Naive thymus-derived CD4-positive, alpha-beta T cell (primary cell): ENCODE measurements at regions of chr2 and their contacts with region 1.

Region 1: GRCh38 chr2:183124222-183124956 is at the start of gene NUP35:
- DNase-seq: peak; percentile 67 to 87 (median 83)
- ATAC-seq: peak; percentile 97
- H3K4me3 ChIP-seq: peak within 1 kb of the TSS; percentile 96
- H3K4me3 Mint-ChIP-seq: peak within 1 kb of the TSS; percentile 90 to 100 (median 96)
- H3K27ac ChIP-seq: peak within 1 kb of the TSS; percentile 74
- H3K27ac Mint-ChIP-seq: peak within 1 kb of the TSS; percentile 93 to 98 (median 97)
- H3K4me1 ChIP-seq: peaks cover 8 to 15% of the 10 kb centered on the region in 2 donors
- H3K4me1 Mint-ChIP-seq: peaks cover 21 to 48% (median 35%) of the 10 kb centered on the region in 7 donors
- H3K27me3 ChIP-seq: no peaks in the 10 kb centered on the region
- H3K27me3 Mint-ChIP-seq: peaks cover 7 to 29% (median 17%) of the 10 kb centered on the region in 5 donors
- total RNA-seq, gene NUP35: 12.5 to 25.3 (median 19.7) TPM

Region 2: DNA sequence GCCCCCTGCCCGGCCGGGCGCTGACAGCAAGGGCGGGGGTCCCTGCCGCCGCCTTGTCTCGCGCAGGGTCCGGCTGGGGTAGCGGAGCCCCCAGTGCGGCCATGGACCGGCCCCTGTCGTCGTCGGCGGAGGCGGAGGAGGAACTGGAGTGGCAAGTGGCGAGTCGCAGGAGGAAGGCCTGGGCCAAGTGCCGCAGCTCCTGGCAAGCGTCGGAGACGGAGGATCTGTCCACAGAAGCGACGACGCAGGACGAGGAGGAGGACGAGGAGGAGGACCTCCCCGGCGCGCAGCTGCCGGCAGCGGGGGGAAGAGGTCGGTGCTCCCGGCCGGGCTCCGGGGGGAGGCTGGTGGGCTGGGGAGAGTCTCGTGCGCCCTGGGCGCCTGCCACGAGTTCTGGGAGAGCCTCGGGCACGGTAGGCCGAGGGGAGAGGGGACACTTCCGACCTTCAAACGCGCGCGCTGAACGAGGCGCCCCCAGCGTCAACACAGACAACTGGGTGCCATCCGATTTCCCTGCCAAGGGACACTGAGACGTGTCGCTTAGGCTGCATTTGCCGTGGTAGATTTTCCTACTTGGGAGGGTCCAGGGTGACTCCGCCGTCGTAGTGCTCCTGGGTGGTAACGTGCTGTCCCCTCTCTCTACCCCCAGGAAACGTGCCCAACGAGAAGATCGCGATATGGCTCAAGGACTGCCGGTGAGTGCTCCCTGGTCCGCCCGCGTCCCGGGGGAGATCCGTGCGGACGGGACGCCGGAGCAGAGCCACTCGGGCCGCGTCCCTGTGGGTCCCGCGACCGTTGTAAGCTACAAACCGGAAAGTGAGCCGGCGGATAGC is 1232.2 kb before region 1 on chr2:
- CTCF ChIA-PET with region 1: no interaction called
- POLR2A ChIA-PET with region 1: no interaction called
- intact Hi-C with region 1: loop called (anchors 1 to 2 kb)
- DNase-seq: peak; percentile 37 to 68 (median 65)
- ATAC-seq: peak; percentile 66
- H3K4me3 ChIP-seq: peak overlapping the region; percentile 85
- H3K4me3 Mint-ChIP-seq: peak overlapping the region; percentile 90 to 99 (median 97)
- H3K27ac ChIP-seq: peak overlapping the region; percentile 76
- H3K27ac Mint-ChIP-seq: peak overlapping the region; percentile 74 to 93 (median 89)
- H3K4me1 ChIP-seq: peaks cover 4 to 22% of the 10 kb centered on the region in 2 donors
- H3K4me1 Mint-ChIP-seq: peaks cover 25 to 49% (median 44%) of the 10 kb centered on the region in 7 donors
- H3K27me3 ChIP-seq: no peaks in the 10 kb centered on the region
- H3K27me3 Mint-ChIP-seq: peaks cover 11 to 35% (median 20%) of the 10 kb centered on the region in 5 donors

Region 3: GRCh38 chr2:183038341-183039300 is 85.8 kb before region 1 on chr2 and contains the start of gene NCKAP1:
- CTCF ChIA-PET with region 1: no interaction called
- POLR2A ChIA-PET with region 1: no interaction called
- intact Hi-C with region 1: loop called (anchors 1 kb)
- DNase-seq: peak; percentile 67 to 94 (median 80)
- ATAC-seq: peak; percentile 92
- H3K4me3 ChIP-seq: peak within 1 kb of the TSS; percentile 77
- H3K4me3 Mint-ChIP-seq: peak within 1 kb of the TSS; percentile 84 to 95 (median 86)
- H3K27ac ChIP-seq: no peak within 1 kb of the TSS
- H3K27ac Mint-ChIP-seq: peak within 1 kb of the TSS in 7 of 9 donors; percentile 55 to 85 (median 69)
- H3K4me1 ChIP-seq: peaks cover 26% of the 10 kb centered on the region in 2 donors
- H3K4me1 Mint-ChIP-seq: peaks cover 24 to 37% (median 34%) of the 10 kb centered on the region in 7 donors
- H3K27me3 ChIP-seq: peaks cover 3 to 28% of the 10 kb centered on the region in 2 donors
- H3K27me3 Mint-ChIP-seq: peaks cover 42 to 80% (median 63%) of the 10 kb centered on the region in 5 donors
- total RNA-seq, gene NCKAP1: 2.4 to 4.1 (median 2.7) TPM

Region 4: DNA sequence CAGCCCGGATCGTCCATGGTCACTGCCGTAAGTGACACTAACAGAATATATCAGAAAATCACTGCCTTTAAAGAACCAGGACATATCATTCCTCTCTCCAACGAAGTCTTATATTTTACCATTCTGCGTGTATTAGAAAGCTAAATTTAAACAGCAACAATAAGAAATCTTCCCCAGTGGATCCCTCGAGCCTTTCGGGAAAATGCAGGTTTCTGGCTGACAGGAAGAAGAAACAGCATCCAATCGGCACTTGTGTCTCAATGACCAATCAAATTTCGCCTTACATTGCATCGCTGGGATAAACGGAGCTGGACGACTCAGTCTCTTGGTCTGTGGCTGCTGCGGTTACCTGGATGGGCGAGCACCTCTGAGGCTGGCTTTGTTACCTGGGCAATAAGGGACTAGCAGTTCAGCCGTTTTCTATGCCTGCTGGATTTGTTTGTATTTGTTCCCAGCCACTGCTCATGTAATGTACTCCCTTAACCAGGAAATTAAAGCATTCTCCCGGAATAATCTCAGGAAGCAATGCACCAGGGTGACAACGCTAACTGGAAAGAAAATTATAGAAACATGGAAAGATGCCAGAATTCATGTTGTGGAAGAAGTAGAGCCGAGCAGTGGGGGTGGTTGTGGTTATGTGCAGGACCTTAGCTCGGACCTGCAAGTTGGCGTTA is 45.8 kb before region 1 on chr2 and contains the start of gene DUSP19:
- CTCF ChIA-PET with region 1: no interaction called
- POLR2A ChIA-PET with region 1: interaction called, 3 read pairs
- intact Hi-C with region 1: loop called (anchors 1 kb)
- DNase-seq: peak; percentile 55 to 84 (median 75)
- ATAC-seq: peak; percentile 83
- H3K4me3 ChIP-seq: peak within 1 kb of the TSS; percentile 82
- H3K4me3 Mint-ChIP-seq: peak within 1 kb of the TSS; percentile 90 to 98 (median 97)
- H3K27ac ChIP-seq: peak within 1 kb of the TSS; percentile 63
- H3K27ac Mint-ChIP-seq: peak within 1 kb of the TSS; percentile 48 to 92 (median 76)
- H3K4me1 ChIP-seq: no peaks in the 10 kb centered on the region
- H3K4me1 Mint-ChIP-seq: peaks cover 5 to 17% (median 8%) of the 10 kb centered on the region in 7 donors
- H3K27me3 ChIP-seq: no peaks in the 10 kb centered on the region
- H3K27me3 Mint-ChIP-seq: peaks cover 0 to 13% (median 0%) of the 10 kb centered on the region in 5 donors
- total RNA-seq, gene DUSP19: 0.92 to 3.3 (median 1.2) TPM